Mammary epithelial cell (primary cell): ENCODE measurements at regions of chr2 and their contacts with region 1.

Region 1: GRCh38 chr2:127857265-127857808 is 618 bp downstream of the POLR2D start:
- DNase-seq: peak; percentile 20
- H3K4me3 ChIP-seq: peak overlapping the region; percentile 79 to 98 (median 97)
- H3K27ac ChIP-seq: peak overlapping the region; percentile 54
- H3K4me1 ChIP-seq: peaks cover 13% of the 10 kb centered on the region
- H3K27me3 ChIP-seq: no peaks in the 10 kb centered on the region
- CTCF ChIP-seq: no peak

Region 2: GRCh38 chr2:127770973-127771735 is 86.2 kb before region 1 on chr2:
- CTCF ChIA-PET with region 1: no interaction called
- dilution Hi-C with region 1: no loop called
- in situ Hi-C with region 1: no loop called
- intact Hi-C with region 1: loop called (anchors 2 kb)
- DNase-seq: peak; percentile 87
- H3K4me3 ChIP-seq: no peak overlapping the region
- H3K27ac ChIP-seq: peak overlapping the region; percentile 97
- H3K4me1 ChIP-seq: peaks cover 13% of the 10 kb centered on the region
- H3K27me3 ChIP-seq: no peaks in the 10 kb centered on the region
- CTCF ChIP-seq: no peak

Region 3: GRCh38 chr2:127874378-127875271 is 17.3 kb after region 1 on chr2:
- CTCF ChIA-PET with region 1: no interaction called
- dilution Hi-C with region 1: no loop called
- in situ Hi-C with region 1: no loop called
- intact Hi-C with region 1: no loop called
- DNase-seq: no peak
- H3K4me3 ChIP-seq: no peak overlapping the region
- H3K27ac ChIP-seq: no peak overlapping the region
- H3K4me1 ChIP-seq: no peaks in the 10 kb centered on the region
- H3K27me3 ChIP-seq: no peaks in the 10 kb centered on the region
- CTCF ChIP-seq: no peak

Region 4: GRCh38 chr2:127884436-127885345 is 27.4 kb after region 1 on chr2:
- CTCF ChIA-PET with region 1: no interaction called
- dilution Hi-C with region 1: no loop called
- in situ Hi-C with region 1: no loop called
- intact Hi-C with region 1: loop called (anchors 2 kb)
- DNase-seq: peak; percentile 59
- H3K4me3 ChIP-seq: peak overlapping the region; percentile 53 to 66 (median 64)
- H3K27ac ChIP-seq: peak overlapping the region; percentile 67
- H3K4me1 ChIP-seq: peaks cover 20% of the 10 kb centered on the region
- H3K27me3 ChIP-seq: no peaks in the 10 kb centered on the region
- CTCF ChIP-seq: no peak

Region 5: DNA sequence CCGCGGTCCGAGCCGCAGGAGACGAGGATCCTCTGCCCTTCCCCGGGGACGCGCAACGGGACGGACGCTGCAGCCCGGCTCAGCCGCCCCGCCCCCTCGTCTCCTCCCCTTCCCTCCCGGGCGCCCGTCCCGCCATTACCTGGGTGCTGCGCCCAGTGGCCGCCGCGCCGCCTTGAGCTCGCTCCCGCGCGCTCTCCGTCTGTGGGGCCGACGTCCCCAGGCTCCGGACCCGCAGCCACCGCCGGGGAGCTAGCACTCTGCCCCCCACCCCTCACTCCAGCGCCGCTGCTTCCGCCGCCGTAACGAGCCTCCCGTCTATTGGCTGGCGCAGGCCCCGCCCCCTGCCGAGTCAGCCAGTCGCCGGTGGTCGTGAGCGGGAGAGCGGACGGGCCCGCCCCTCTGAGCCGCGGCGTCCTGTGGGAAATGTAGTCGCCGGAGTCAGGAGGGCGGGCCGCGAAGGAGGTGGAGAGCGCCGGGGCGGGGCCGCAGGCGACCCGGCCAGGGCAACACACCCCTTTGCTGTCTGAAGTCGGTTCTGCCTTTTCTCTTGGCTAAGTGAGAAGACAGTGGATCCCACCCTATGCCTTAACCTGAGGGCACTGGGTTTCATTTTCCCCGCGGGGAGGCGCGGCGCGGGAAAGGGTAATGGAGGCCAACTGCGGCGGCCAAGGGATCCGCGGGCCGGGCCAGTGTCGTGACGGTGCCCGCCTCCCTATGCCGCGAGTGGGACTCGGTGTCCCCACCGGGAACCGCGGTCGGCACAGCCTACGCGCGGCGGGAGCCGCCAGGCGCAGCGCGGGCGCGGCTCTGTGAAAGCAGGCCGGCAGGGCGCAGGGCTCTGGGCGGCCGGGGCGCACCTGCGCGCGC is 170.7 kb after region 1 on chr2 and contains the start of gene SAP130:
- CTCF ChIA-PET with region 1: no interaction called
- dilution Hi-C with region 1: no loop called
- in situ Hi-C with region 1: no loop called
- intact Hi-C with region 1: loop called (anchors 5 kb)
- DNase-seq: peak; percentile 93
- H3K4me3 ChIP-seq: peak within 1 kb of the TSS; percentile 79 to 100 (median 92)
- H3K27ac ChIP-seq: peak within 1 kb of the TSS; percentile 61
- H3K4me1 ChIP-seq: no peaks in the 10 kb centered on the region
- H3K27me3 ChIP-seq: no peaks in the 10 kb centered on the region
- CTCF ChIP-seq: no peak
- total RNA-seq, gene SAP130: 8.7 to 21.9 TPM

Region 6: DNA sequence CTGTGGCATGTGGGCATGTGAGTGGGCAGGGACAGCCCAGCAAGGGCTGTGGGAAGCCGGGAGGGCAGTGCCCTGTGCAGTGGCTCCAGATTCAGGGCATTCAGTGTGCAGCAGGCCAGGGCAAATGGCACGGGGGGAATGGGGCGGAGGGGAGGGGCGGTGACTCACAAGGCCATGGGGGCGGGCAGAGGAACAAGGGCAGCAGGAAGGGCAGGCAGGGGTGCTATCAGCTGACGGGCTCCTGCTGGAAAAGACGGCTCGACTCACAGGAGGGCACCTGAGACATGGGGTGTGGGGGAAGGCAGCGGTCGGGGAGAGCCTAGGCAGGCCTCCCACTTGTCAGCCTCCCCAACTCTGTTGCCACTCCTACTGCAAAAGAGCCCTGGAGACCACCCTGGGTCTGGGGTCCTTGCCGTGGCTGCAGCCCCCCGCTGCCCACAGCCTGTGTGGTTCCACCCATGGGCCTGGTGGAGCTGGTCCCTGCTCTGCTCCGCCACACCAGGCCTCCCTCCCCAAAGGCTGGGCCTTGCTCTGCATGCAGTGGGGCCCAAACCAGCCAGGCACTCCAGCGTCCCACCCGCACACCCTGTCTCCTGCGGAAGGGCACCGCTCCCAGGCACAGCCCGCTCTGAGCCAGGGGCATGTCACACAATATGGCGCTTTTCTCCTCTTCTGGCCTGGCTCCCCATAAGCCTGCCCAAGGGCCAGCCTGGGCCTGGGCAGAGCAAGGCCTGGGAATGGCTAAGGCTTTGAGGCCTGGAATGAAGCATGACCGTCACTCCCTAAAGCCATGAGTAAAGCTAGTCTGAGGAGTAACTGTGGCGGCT is 435.5 kb after region 1 on chr2:
- CTCF ChIA-PET with region 1: no interaction called
- dilution Hi-C with region 1: no loop called
- in situ Hi-C with region 1: no loop called
- intact Hi-C with region 1: no loop called
- DNase-seq: no peak
- H3K4me3 ChIP-seq: no peak overlapping the region
- H3K27ac ChIP-seq: no peak overlapping the region
- H3K4me1 ChIP-seq: peaks cover 17% of the 10 kb centered on the region
- H3K27me3 ChIP-seq: no peaks in the 10 kb centered on the region
- CTCF ChIP-seq: no peak